ENCODE measurements at regions of chr5 and their contacts with region 1.

Region 1: DNA sequence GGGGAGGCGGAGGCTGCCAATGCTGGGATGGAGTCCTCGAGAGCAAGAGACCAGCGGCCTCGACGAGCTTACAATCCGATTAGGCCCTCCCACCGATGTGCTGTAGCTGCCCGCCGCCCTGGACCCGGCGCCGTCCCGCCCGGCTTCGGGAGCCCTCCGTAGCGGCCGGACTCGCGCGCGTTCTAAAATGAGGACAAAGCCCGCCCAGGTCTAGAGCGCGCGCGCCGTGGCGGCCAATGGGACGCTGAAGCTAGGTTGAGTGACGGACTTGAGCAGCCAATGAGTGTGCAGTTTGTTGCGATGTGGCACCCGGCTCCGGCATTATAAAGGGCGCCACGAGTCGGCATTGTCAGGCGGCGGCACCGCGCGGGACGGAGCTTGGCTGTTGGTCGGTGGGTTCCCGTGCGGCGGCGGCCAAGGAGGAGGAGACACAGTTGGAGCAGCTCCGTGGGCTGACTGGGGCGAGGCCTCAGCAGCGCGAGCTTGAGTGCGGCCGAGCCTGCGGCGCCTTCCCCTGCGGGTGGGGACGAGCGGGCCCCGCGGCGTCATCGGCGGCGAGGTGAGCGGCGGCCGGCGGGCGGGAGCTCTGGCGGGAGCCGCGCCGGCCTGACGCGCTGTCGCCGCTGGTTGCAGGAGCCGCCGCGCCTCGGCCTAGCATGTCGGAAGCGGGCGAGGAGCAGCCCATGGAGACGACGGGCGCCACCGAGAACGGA is at the start of gene HNRNPAB:
- DNase-seq: peak; percentile 95
- H3K4me3 Mint-ChIP-seq: peak within 1 kb of the TSS; percentile 98
- H3K27ac Mint-ChIP-seq: peak within 1 kb of the TSS; percentile 98
- H3K4me1 Mint-ChIP-seq: peaks cover 38% of the 10 kb centered on the region
- H3K27me3 Mint-ChIP-seq: peaks cover 2% of the 10 kb centered on the region
- total RNA-seq, gene HNRNPAB: 177 to 186 TPM

Region 2: DNA sequence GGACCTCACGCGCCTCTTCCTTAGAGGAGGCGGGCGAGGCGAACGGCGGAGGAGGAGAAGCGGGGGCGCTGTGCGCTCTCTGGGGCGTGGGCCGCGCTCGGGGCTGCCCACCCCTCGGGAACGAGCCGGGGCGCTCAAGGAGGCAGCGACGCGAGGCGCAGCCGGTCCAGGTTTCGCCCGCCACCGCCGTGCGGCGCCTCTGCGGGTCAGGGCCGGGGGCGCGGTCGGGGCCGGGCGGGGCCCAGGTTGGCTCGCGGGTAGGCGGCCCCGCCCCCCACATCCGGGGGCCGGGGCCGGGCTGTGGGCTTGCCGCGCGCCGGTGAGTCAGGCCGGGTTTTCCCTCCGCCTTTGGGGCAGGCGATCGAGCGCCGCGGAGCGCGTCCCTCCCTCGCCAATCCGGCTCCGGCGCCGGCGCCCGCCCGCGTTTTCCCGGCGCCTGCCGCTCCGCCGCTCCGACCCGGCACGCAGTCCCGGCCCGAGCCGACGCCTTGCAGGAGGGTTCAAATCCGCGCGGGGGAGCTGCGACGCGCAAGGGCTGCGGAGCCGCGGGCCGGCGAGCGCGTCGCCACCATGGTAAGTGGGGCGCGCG is 91.0 kb before region 1 on chr5 and contains the start of gene N4BP3:
- CTCF ChIA-PET with region 1: no interaction called
- POLR2A ChIA-PET with region 1: interaction called, 10 read pairs
- DNase-seq: peak; percentile 85
- H3K4me3 Mint-ChIP-seq: peak within 1 kb of the TSS; percentile 77
- H3K27ac Mint-ChIP-seq: no peak within 1 kb of the TSS
- H3K4me1 Mint-ChIP-seq: peaks cover 40% of the 10 kb centered on the region
- H3K27me3 Mint-ChIP-seq: peaks cover 48% of the 10 kb centered on the region
- total RNA-seq, gene N4BP3: 4.3 to 4.4 TPM

Region 3: GRCh38 chr5:178194026-178194425 is 10.3 kb before region 1 on chr5:
- CTCF ChIA-PET with region 1: no interaction called
- POLR2A ChIA-PET with region 1: interaction called, 10 read pairs
- DNase-seq: no peak
- H3K4me3 Mint-ChIP-seq: no peak overlapping the region
- H3K27ac Mint-ChIP-seq: no peak overlapping the region
- H3K4me1 Mint-ChIP-seq: peaks cover 14% of the 10 kb centered on the region
- H3K27me3 Mint-ChIP-seq: peaks cover 27% of the 10 kb centered on the region

Region 4: DNA sequence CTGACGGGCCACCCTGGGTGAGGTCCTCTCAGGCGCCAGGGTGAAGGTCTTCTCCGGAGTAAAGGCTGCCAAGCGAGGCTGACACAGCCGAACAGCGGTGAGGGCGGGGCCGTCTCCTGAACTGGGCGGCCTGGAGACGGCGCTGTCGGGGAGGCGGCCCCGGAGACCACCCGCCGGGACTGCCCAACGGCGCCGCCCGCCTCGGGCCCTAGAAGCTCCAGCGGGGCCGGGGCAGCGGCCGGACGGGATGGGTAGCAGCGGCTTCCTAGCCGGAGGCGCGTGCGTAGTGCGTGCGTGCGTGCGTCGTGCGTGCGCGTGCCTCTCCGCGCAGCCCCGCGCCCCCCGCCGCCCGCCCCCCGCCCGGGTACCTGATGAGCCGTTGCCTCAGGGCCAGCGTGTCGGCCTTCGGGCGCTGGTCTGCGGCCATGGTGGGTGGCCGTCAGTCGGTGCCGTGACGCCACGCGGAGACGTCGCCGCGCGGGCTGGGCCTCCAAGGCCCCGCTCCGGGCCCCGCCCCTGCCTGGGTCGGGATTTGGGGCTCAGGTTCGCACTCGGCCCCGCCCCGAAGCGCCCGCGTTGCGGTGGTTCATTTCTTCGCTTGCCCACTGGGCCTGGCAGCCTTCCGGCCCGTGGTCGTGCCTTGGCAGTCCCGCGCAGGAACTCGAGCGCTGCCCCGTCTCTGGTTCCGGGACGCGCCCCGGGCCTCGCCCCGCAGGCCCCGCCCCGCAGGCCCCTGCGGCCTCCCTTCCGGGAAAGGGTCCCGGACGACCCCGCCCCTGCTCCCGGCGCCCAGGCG is 28.0 kb after region 1 on chr5 and contains the start of gene PHYKPL:
- CTCF ChIA-PET with region 1: interaction called, 7 read pairs
- POLR2A ChIA-PET with region 1: interaction called, 120 read pairs
- DNase-seq: peak; percentile 81
- H3K4me3 Mint-ChIP-seq: peak within 1 kb of the TSS; percentile 89
- H3K27ac Mint-ChIP-seq: peak within 1 kb of the TSS; percentile 84
- H3K4me1 Mint-ChIP-seq: peaks cover 82% of the 10 kb centered on the region
- H3K27me3 Mint-ChIP-seq: no peaks in the 10 kb centered on the region
- total RNA-seq, gene PHYKPL: 106 to 112 TPM

Region 5: GRCh38 chr5:178238711-178239592 is 34.6 kb after region 1 on chr5:
- CTCF ChIA-PET with region 1: interaction called, 7 read pairs
- POLR2A ChIA-PET with region 1: interaction called, 12 read pairs
- DNase-seq: peak; percentile 51
- H3K4me3 Mint-ChIP-seq: peak overlapping the region; percentile 41
- H3K27ac Mint-ChIP-seq: peak overlapping the region; percentile 95
- H3K4me1 Mint-ChIP-seq: peaks cover 74% of the 10 kb centered on the region
- H3K27me3 Mint-ChIP-seq: no peaks in the 10 kb centered on the region